Activated B cell treated with CpG ODN at 0.5 μM for 24 hours (primary cell): ENCODE measurements at regions of chr12 and their contacts with region 1.

Region 1: DNA sequence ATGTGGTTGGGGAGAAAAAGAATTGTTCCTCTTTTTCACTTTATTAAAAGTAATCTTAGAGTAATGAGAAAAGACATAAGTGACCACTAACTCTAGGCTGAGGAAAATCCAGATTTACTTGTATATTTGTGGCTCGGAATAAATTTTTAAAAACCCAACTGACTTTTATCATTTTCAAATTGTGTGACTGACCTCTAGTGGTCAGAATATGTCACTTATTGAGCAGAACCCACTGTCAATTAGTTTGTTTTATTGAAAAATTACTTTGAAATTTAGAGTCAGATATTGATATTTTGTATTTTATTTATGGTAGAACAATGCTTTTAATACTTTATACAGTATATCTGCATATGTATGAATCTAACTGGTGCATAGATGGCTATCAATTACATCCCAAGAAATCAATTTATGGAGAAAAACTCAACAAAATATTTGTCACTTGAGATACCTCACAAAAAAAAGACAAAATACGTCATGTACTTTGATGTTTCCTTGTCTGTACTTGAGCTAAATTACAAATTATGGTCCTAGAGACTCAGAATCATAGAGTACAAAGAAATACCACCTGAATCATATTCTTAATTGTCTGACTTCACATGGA is 229.4 kb downstream of the CNTN1 start:
- DNase-seq: no peak
- ATAC-seq: no peak
- H3K4me3 Mint-ChIP-seq: no peak overlapping the region
- H3K27ac Mint-ChIP-seq: no peak overlapping the region
- H3K4me1 Mint-ChIP-seq: no peaks in the 10 kb centered on the region
- H3K27me3 Mint-ChIP-seq: peaks cover 4% of the 10 kb centered on the region
- CTCF ChIP-seq: peak; percentile 41

Region 2: GRCh38 chr12:39587225-39587624 is 1334.4 kb before region 1 on chr12:
- CTCF ChIA-PET with region 1: no interaction called
- POLR2A ChIA-PET with region 1: no interaction called
- intact Hi-C with region 1: loop called (anchors 2 kb)
- DNase-seq: no peak
- ATAC-seq: peak; percentile 62
- H3K4me3 Mint-ChIP-seq: no peak overlapping the region
- H3K27ac Mint-ChIP-seq: no peak overlapping the region
- H3K4me1 Mint-ChIP-seq: peaks cover 2% of the 10 kb centered on the region
- H3K27me3 Mint-ChIP-seq: no peaks in the 10 kb centered on the region
- CTCF ChIP-seq: no peak

Region 3: DNA sequence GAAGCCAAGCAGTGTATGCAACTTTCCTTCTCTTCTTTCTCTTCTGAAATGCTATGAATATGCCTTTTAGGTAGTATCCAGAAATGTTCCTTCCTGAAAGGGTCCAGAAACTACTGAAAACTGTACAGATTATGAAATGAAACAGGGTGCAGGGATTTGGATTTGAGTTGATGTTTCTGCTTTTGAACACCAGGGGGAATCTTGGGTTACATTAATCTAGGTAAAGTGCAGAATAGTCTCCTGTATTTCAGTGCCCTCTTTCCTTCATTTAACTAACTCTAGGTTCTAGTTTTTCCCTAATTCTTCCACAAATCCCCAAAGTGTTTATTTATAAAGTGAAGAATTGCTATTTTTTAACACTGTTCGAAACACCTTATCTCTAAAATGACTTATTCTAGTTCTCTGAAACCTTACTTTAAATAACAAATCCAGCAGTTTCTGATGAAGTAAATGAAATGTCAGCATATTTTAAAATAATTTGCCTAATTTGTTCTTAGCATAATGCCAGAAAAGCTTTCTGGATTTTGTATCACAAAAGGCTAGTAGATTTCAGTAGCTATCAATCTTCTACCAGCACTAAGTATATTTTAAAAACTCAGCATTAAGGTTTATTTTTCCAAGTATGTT is 585.0 kb before region 1 on chr12:
- CTCF ChIA-PET with region 1: no interaction called
- POLR2A ChIA-PET with region 1: no interaction called
- intact Hi-C with region 1: loop called (anchors 2 kb)
- DNase-seq: no peak
- ATAC-seq: peak; percentile 28
- H3K4me3 Mint-ChIP-seq: no peak overlapping the region
- H3K27ac Mint-ChIP-seq: no peak overlapping the region
- H3K4me1 Mint-ChIP-seq: no peaks in the 10 kb centered on the region
- H3K27me3 Mint-ChIP-seq: no peaks in the 10 kb centered on the region
- CTCF ChIP-seq: no peak

Region 4: DNA sequence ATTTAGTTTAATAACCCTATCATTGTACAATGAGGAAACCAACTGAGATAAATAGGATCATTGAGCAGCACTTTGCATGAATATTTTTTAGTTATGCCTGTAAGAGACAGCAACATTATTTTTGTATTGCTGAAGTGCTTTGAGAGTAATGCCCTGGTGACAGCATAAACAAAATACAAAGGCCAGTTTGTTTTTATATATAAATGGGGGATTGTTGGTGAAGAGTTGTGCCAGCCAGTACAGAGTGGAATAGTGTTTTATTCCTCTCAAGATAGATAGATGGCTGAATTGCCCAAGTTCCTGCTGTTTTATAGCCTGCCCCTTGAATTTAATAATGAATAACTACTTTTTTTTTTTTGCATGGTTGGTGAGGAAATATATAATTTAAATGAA is 127.6 kb before region 1 on chr12:
- CTCF ChIA-PET with region 1: no interaction called
- POLR2A ChIA-PET with region 1: no interaction called
- intact Hi-C with region 1: no loop called
- DNase-seq: no peak
- ATAC-seq: no peak
- H3K4me3 Mint-ChIP-seq: no peak overlapping the region
- H3K27ac Mint-ChIP-seq: no peak overlapping the region
- H3K4me1 Mint-ChIP-seq: no peaks in the 10 kb centered on the region
- H3K27me3 Mint-ChIP-seq: no peaks in the 10 kb centered on the region
- CTCF ChIP-seq: no peak

Region 5: GRCh38 chr12:40870981-40871380 is 50.7 kb before region 1 on chr12:
- CTCF ChIA-PET with region 1: no interaction called
- POLR2A ChIA-PET with region 1: no interaction called
- intact Hi-C with region 1: loop called (anchors 1 kb)
- DNase-seq: no peak
- ATAC-seq: no peak
- H3K4me3 Mint-ChIP-seq: no peak overlapping the region
- H3K27ac Mint-ChIP-seq: no peak overlapping the region
- H3K4me1 Mint-ChIP-seq: no peaks in the 10 kb centered on the region
- H3K27me3 Mint-ChIP-seq: peaks cover 2% of the 10 kb centered on the region
- CTCF ChIP-seq: no peak

Region 6: GRCh38 chr12:40889329-40889728 is 32.3 kb before region 1 on chr12:
- CTCF ChIA-PET with region 1: no interaction called
- POLR2A ChIA-PET with region 1: no interaction called
- intact Hi-C with region 1: no loop called
- DNase-seq: no peak
- ATAC-seq: no peak
- H3K4me3 Mint-ChIP-seq: no peak overlapping the region
- H3K27ac Mint-ChIP-seq: no peak overlapping the region
- H3K4me1 Mint-ChIP-seq: no peaks in the 10 kb centered on the region
- H3K27me3 Mint-ChIP-seq: no peaks in the 10 kb centered on the region
- CTCF ChIP-seq: no peak

Region 7: DNA sequence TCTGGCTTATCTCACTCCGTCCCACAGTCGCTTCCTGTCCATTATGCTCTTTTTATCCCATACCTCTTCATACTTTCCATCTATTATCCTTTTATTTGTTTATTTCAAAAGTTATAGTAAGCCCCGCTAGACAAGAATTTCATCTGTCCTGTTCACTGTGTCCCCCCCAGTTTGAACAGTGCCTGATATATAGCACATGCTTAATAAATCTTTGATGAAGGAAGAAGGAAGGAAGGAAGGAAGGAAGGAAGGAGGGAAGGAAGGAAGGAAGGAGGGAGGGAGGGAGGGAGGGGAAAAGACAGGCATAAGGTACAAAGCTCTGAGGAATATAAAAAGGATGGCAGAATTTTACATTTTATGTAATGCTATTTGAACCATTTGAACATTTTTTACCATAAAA is 898.3 kb after region 1 on chr12:
- CTCF ChIA-PET with region 1: no interaction called
- POLR2A ChIA-PET with region 1: no interaction called
- intact Hi-C with region 1: no loop called
- DNase-seq: no peak
- ATAC-seq: no peak
- H3K4me3 Mint-ChIP-seq: no peak overlapping the region
- H3K27ac Mint-ChIP-seq: no peak overlapping the region
- H3K4me1 Mint-ChIP-seq: no peaks in the 10 kb centered on the region
- H3K27me3 Mint-ChIP-seq: no peaks in the 10 kb centered on the region
- CTCF ChIP-seq: no peak